Left lung (tissue), 14 donors: ENCODE measurements at regions of chr2 and their contacts with region 1.

Region 1: GRCh38 chr2:217510771-217511291 is 492.0 kb downstream of the TNS1 start:
- DNase-seq: peak in 3 of 4 donors; percentile 46 to 89 (median 77)
- ATAC-seq: peak; percentile 98
- H3K4me3 ChIP-seq: no peak overlapping the region
- H3K27ac ChIP-seq: no peak overlapping the region
- H3K4me1 ChIP-seq: peaks cover 0 to 5% of the 10 kb centered on the region in 2 donors
- H3K27me3 ChIP-seq: no peaks in the 10 kb centered on the region
- CTCF ChIP-seq: peak; percentile 49 to 56

Region 2: GRCh38 chr2:216683846-216684507 is 826.9 kb before region 1 on chr2:
- intact Hi-C with region 1: loop called in 1 of 2 experiments (anchors 5 kb)
- DNase-seq: peak in 2 of 4 donors; percentile 85 to 95
- ATAC-seq: peak; percentile 61
- H3K4me3 ChIP-seq: no peak overlapping the region
- H3K27ac ChIP-seq: no peak overlapping the region
- H3K4me1 ChIP-seq: peaks cover 5 to 7% of the 10 kb centered on the region in 2 donors
- H3K27me3 ChIP-seq: peaks cover 0 to 22% of the 10 kb centered on the region in 2 donors
- CTCF ChIP-seq: no peak

Region 3: GRCh38 chr2:217713395-217714286 is 202.8 kb after region 1 on chr2:
- intact Hi-C with region 1: loop called in 1 of 2 experiments (anchors 10 kb)
- DNase-seq: peak; percentile 64 to 84 (median 71)
- ATAC-seq: peak; percentile 97
- H3K4me3 ChIP-seq: no peak overlapping the region
- H3K27ac ChIP-seq: no peak overlapping the region
- H3K4me1 ChIP-seq: peaks cover 2 to 5% of the 10 kb centered on the region in 2 donors
- H3K27me3 ChIP-seq: no peaks in the 10 kb centered on the region
- CTCF ChIP-seq: peak; percentile 91 to 99